ENCODE measurements at regions of chr17 and their contacts with region 1.

Region 1: DNA sequence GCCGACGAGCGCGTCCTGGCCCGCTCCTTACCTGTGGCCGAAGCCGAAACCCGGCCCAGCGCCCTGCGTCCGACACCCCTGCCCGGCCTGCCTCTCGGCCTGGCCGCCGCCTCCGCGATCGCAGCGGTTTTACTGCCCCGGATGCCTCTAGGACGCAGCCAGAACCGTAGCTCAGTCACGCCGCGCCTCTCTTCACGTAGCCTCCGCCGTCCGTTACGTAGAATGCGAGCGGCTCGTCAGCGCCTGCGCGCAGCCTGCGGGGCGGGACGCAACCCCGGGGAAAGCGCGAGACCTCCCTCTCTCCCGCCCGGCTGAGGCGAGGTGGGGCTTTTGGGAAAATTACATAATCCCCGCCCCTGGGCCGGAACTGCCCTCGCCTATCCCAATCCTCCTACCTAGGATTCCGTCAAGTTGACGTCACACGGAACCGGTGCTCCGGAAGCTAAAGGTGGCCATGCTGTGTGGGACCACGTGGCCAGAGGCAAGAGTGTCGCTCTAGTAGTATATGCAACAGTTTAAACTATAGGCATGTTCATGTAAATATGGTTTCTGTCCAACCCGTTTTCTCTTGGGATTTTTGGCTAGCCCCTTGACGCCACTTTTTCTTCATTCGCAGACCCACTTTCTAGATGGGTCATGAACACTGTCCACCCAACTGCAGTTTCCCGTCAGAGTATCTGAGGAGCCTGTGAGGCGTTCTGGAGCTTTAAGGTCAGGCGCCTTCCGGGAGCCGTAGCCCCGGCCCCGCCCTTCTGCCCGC is at the start of gene CCDC47:
- DNase-seq: peak; percentile 100
- ATAC-seq: peak; percentile 92 to 94
- H3K4me3 ChIP-seq: peak within 1 kb of the TSS; percentile 71
- H3K27ac ChIP-seq: peak within 1 kb of the TSS; percentile 98 to 99
- H3K4me1 ChIP-seq: peaks cover 30% of the 10 kb centered on the region
- CTCF ChIP-seq: no peak
- EP300 ChIP-seq: no peak
- POLR2A ChIP-seq: peak; percentile 94
- RAD21 ChIP-seq: no peak
- polyA plus RNA-seq, gene CCDC47: 135 and 163 TPM in 2 replicates

Region 2: DNA sequence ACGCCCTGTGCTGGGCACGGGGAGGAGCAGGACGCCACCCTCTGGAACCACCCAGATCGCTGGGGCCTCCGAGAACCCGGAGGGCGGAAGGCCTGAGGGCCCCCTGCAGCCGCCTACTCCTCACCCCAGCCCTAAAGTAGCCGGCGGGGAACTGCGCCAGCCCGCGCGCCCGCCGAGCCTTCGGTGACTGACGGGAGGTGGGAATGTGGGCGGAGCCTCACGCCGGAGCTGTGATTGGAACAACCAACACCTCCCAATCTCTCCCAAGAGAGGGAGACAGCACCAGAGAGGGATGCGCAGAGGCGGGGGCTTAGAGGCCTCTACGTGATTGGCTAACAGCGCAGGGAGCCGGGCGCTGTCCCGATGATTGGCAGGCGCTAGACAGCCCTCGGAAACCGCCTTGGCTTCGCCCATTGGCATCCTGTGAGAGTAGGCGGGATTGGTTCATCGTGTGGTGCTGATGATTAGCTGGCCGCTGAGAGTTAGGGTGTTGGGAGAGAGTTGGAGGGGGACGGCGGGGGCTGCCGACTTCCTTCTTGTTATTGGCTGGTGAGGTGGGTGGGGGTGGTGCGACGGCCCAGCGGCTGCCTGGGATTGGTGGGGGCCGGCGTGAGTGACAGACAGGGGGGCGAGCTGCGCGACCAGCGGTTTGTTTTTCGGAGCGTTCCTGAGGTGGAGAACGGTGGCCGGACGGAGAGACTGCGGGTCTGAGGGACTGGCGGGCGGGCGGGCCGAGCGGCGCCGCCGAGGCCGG is 151.6 kb before region 1 on chr17 and contains the start of gene MAP3K3:
- CTCF ChIA-PET with region 1: no interaction called
- POLR2A ChIA-PET with region 1: interaction called, 17 read pairs
- DNase-seq: peak; percentile 100
- ATAC-seq: peak; percentile 88 to 96
- H3K4me3 ChIP-seq: peak within 1 kb of the TSS; percentile 92
- H3K27ac ChIP-seq: peak within 1 kb of the TSS; percentile 82 to 95
- H3K4me1 ChIP-seq: peaks cover 13% of the 10 kb centered on the region
- CTCF ChIP-seq: no peak
- EP300 ChIP-seq: no peak
- POLR2A ChIP-seq: peak; percentile 90
- RAD21 ChIP-seq: no peak
- polyA plus RNA-seq, gene MAP3K3: 10.8 and 12.6 TPM in 2 replicates

Region 3: DNA sequence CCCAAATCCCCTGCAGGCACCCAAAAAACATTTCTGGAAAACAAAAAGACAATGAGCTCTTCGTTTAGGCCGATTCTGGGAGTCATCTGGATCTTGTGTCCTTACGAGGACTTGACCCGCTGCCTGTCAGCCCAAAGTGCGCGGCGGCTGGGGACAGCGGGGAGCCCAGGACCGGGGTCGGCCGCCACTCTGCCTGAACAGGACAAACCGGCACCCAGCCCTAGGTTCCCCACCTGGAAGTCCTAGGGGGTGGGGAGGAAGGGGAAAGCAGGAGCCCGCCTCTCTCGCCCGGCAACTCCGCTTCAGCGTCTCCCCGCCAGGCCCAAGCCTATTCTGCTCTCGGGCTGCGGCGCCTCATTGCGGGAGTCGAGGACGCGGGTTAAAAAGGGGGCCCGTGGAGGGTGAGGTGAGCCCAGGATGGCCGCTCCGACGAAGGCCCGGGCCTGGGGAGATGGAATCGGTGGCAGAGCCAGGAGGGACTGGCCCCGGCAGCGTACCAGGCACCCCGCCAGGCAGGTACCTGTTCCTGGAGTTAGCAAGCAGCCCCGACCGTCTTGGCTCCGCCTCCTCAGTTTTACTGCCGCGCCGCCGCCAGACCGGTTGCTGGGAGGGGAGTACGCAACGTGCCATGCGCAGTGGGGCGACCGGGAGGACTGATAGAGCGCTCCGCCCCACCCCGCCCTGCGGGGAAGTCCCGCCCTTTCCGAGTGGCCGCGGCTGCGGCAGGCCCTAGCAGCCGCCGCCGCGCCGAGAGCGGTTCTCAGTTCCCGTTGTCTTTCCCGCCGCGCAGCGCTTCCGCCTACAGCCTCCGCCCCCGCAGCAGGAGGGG is 32.1 kb before region 1 on chr17 and contains the start of gene STRADA:
- CTCF ChIA-PET with region 1: interaction called, 3 read pairs
- POLR2A ChIA-PET with region 1: interaction called, 35 read pairs
- DNase-seq: peak; percentile 95 to 99
- ATAC-seq: peak; percentile 92 to 96
- H3K4me3 ChIP-seq: peak within 1 kb of the TSS; percentile 78
- H3K27ac ChIP-seq: peak within 1 kb of the TSS; percentile 92 to 95
- H3K4me1 ChIP-seq: peaks cover 14% of the 10 kb centered on the region
- CTCF ChIP-seq: no peak
- EP300 ChIP-seq: 0 out of 5 replicates have a peak, but pooled peaks of 1 of the 2 experiments have one; percentile 10
- POLR2A ChIP-seq: peak; percentile 79
- RAD21 ChIP-seq: no peak; a peak in 1 of 5 replicates
- polyA plus RNA-seq, gene STRADA: 33.0 and 42.7 TPM in 2 replicates

Region 4: GRCh38 chr17:63751806-63752205 is 21.8 kb before region 1 on chr17:
- CTCF ChIA-PET with region 1: interaction called, 4 read pairs
- POLR2A ChIA-PET with region 1: interaction called, 13 read pairs
- DNase-seq: no peak
- ATAC-seq: no peak
- H3K4me3 ChIP-seq: no peak overlapping the region
- H3K27ac ChIP-seq: no peak overlapping the region
- H3K4me1 ChIP-seq: no peaks in the 10 kb centered on the region
- CTCF ChIP-seq: no peak
- EP300 ChIP-seq: no peak
- POLR2A ChIP-seq: no peak
- RAD21 ChIP-seq: no peak

Region 5: DNA sequence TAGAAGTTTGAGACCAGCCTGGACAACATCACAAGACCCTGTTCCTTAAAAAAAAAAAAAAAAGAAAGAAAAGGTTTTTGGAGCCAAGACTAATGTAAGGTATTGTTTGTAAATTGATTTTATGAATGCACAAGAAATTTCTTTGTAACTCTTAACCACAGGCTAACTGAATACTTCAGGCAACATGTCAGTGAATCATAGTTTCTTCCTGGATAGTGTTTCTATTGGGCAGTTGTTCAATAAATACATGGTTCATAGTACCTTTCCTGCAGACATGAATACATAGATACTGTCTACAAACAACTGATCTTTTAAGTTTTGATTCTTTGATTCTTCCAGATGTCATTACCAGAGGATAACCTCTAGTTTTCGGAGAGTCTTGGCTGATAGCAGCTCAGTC is 12.0 kb after region 1 on chr17:
- CTCF ChIA-PET with region 1: interaction called, 15 read pairs
- POLR2A ChIA-PET with region 1: interaction called, 31 read pairs
- DNase-seq: no peak
- ATAC-seq: no peak
- H3K4me3 ChIP-seq: no peak overlapping the region
- H3K27ac ChIP-seq: no peak overlapping the region
- H3K4me1 ChIP-seq: peaks cover 24% of the 10 kb centered on the region
- CTCF ChIP-seq: no peak
- EP300 ChIP-seq: no peak
- POLR2A ChIP-seq: no peak
- RAD21 ChIP-seq: no peak

Region 6: GRCh38 chr17:63834431-63835166 is 61.0 kb after region 1 on chr17:
- CTCF ChIA-PET with region 1: interaction called, 10 read pairs
- POLR2A ChIA-PET with region 1: interaction called, 9 read pairs
- DNase-seq: peak; percentile 92 to 95
- ATAC-seq: peak; percentile 82 to 93
- H3K4me3 ChIP-seq: no peak overlapping the region
- H3K27ac ChIP-seq: peak overlapping the region in 1 of 2 experiments; percentile 70; a peak in 3 of 6 replicates
- H3K4me1 ChIP-seq: peaks cover 20% of the 10 kb centered on the region; the same call in 2 of the 3 replicates
- CTCF ChIP-seq: peak; percentile 94
- EP300 ChIP-seq: no peak
- POLR2A ChIP-seq: no peak
- RAD21 ChIP-seq: peak; percentile 59 to 65

Region 7: GRCh38 chr17:63842540-63843386 is 69.2 kb after region 1 on chr17 and contains the start of gene SMARCD2:
- CTCF ChIA-PET with region 1: no interaction called
- POLR2A ChIA-PET with region 1: interaction called, 13 read pairs
- DNase-seq: peak; percentile 90 to 100
- ATAC-seq: peak; percentile 80 to 90
- H3K4me3 ChIP-seq: peak within 1 kb of the TSS; percentile 89
- H3K27ac ChIP-seq: peak within 1 kb of the TSS; percentile 94 to 97
- H3K4me1 ChIP-seq: peaks cover 32% of the 10 kb centered on the region
- CTCF ChIP-seq: no peak
- EP300 ChIP-seq: peak in 1 of 2 experiments; percentile 18; a peak in 1 of 5 replicates
- POLR2A ChIP-seq: peak; percentile 36; the same call in 1 of the 2 replicates
- RAD21 ChIP-seq: no peak
- polyA plus RNA-seq, gene SMARCD2: 52.7 and 61.9 TPM in 2 replicates

Region 8: DNA sequence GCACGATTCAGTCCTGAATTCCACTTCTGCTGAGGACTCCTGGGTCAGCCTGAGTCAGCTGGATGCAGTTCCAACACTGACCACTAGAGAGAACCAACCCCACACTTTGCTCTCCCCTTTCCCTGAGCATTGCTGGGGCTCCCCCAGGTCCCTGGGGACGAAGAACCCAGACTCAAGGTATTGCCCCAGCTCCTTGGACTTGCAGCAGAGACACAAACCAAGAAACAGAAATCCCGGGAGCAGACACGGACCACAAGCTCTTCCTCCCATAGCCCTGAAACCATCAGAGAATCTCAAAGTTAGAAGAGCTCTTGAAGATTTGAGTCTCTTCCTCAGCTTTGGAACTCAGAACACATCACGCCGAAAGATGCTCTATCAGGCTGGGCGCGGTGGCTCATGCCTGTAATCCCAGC is 145.8 kb after region 1 on chr17:
- CTCF ChIA-PET with region 1: no interaction called
- POLR2A ChIA-PET with region 1: no interaction called
- DNase-seq: peak; percentile 67 to 92
- ATAC-seq: peak; percentile 83 to 97
- H3K4me3 ChIP-seq: no peak overlapping the region
- H3K27ac ChIP-seq: no peak overlapping the region
- H3K4me1 ChIP-seq: no peaks in the 10 kb centered on the region; the same call in 2 of the 3 replicates
- CTCF ChIP-seq: peak; percentile 90
- EP300 ChIP-seq: no peak
- POLR2A ChIP-seq: no peak
- RAD21 ChIP-seq: peak; percentile 91 to 95

Region 9: GRCh38 chr17:64005734-64006167 is 232.2 kb after region 1 on chr17:
- CTCF ChIA-PET with region 1: no interaction called
- POLR2A ChIA-PET with region 1: no interaction called
- DNase-seq: peak; percentile 56 to 64
- ATAC-seq: peak; percentile 22 to 66; a peak in 4 of 6 replicates
- H3K4me3 ChIP-seq: no peak overlapping the region
- H3K27ac ChIP-seq: peak overlapping the region in 1 of 2 experiments; percentile 49; a peak in 3 of 6 replicates
- H3K4me1 ChIP-seq: peaks cover 28% of the 10 kb centered on the region
- CTCF ChIP-seq: no peak
- EP300 ChIP-seq: 0 out of 5 replicates have a peak, but pooled peaks of 1 of the 2 experiments have one; percentile 11
- POLR2A ChIP-seq: no peak
- RAD21 ChIP-seq: no peak